ENCODE measurements at regions of chr20 and their contacts with region 1.

Region 1: GRCh38 chr20:50101887-50102286 is 11.1 kb downstream of the UBE2V1 start:
- DNase-seq: no peak
- ATAC-seq: no peak
- H3K4me3 Mint-ChIP-seq: no peak overlapping the region
- H3K27ac Mint-ChIP-seq: peak overlapping the region; percentile 1
- H3K4me1 Mint-ChIP-seq: peaks cover 28% of the 10 kb centered on the region
- H3K27me3 Mint-ChIP-seq: no peaks in the 10 kb centered on the region

Region 2: GRCh38 chr20:50085452-50086365 is 16.2 kb before region 1 on chr20:
- CTCF ChIA-PET with region 1: interaction called, 72 read pairs
- POLR2A ChIA-PET with region 1: no interaction called
- DNase-seq: peak; percentile 54
- ATAC-seq: peak; percentile 83
- H3K4me3 Mint-ChIP-seq: peak overlapping the region; percentile 64
- H3K27ac Mint-ChIP-seq: peak overlapping the region; percentile 80
- H3K4me1 Mint-ChIP-seq: peaks cover 22% of the 10 kb centered on the region
- H3K27me3 Mint-ChIP-seq: no peaks in the 10 kb centered on the region

Region 3: DNA sequence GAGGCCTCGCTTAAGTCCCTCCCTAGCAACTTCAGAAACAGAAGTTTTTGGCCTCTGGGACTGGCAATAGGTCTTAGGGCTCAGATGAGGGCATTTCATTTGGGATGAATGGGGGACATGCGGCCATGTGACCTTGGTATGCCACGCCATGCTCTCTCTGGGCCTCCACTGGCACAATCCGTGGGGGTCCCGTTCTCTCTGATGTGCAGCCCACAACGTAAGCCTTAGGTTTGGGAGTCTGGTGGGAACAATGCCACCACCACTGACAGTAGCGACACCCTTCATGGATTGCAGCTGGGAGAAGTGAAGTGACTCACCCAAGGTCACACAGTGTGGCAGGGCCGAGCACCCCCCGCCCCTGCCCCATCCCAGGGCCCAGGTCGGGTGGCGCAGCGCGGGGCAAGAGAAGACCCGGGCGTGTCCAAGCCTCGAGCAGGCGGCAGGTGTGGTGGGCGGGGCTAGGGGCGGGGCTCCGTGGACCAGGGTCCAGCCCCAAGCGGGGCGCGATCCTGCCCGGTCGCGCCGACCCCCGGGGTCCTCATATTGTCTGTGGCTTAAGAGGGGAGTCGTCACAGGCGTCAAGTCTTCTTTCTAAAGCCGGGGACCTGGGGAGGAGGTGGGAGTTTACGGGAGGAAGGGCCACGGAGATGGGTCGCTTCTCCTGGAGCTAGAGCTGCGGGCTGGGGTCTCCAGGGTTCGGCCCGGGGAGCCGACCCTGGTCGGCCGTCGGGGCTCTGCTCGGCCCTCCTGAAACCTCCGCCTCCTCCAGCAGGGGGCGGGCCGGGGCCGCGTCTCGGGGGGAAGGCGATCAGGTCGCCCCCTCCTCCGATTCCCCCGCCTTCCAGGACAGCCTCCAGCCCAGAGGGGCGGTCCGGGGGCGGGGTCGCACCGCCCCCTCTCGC is 88.0 kb after region 1 on chr20:
- CTCF ChIA-PET with region 1: no interaction called
- POLR2A ChIA-PET with region 1: no interaction called
- DNase-seq: peak; percentile 89
- ATAC-seq: peak; percentile 54
- H3K4me3 Mint-ChIP-seq: peak overlapping the region; percentile 53
- H3K27ac Mint-ChIP-seq: peak overlapping the region; percentile 43
- H3K4me1 Mint-ChIP-seq: peaks cover 26% of the 10 kb centered on the region
- H3K27me3 Mint-ChIP-seq: peaks cover 11% of the 10 kb centered on the region

Measured in activated CD8-positive, alpha-beta T cell treated with anti-CD3 and anti-CD28 coated beads, Interleukin-2, amount 10 ng/mL, durations not matched to agents 7 days and 5 days (primary cell).